ENCODE measurements at regions of chr20 and their contacts with region 1.

Region 1: GRCh38 chr20:29123861-29124260 is 2133.6 kb upstream of the DEFB115 start:
- DNase-seq: no peak
- ATAC-seq: no peak
- H3K4me3 ChIP-seq: no peak overlapping the region
- H3K27ac ChIP-seq: no peak overlapping the region
- H3K4me1 ChIP-seq: no peaks in the 10 kb centered on the region
- H3K27me3 ChIP-seq: no peaks in the 10 kb centered on the region
- CTCF ChIP-seq: no peak
- POLR2A ChIP-seq: no peak
- RAD21 ChIP-seq: no peak

Region 2: DNA sequence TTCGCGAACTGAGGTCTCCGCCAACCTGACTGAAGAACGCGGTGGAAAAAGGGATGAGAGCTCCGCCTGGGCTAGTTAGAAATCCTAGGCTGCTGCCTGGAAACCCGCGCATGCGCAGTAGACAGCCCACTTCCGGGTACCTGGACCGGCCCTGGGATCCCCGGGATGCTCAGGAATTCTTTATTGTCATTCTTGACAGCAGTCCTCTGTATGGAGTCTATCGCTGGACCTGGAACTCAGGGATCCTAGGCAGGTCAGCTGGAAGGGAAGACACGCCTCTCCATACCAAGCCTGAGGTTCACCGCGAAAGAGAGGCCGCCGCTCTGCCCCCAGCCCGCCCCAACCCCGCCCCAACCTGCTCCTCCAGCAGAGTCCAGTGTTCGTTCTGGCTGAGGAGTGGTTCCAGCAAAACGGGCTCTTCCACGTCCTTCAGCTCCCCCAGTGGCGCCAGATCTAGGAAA is 754.5 kb after region 1 on chr20:
- CTCF ChIA-PET with region 1: no interaction called
- POLR2A ChIA-PET with region 1: no interaction called
- RAD21 ChIA-PET with region 1: no interaction called
- intact Hi-C with region 1: loop called (anchors 10 kb)
- DNase-seq: no peak
- ATAC-seq: peak; percentile 27; the same call in 1 of the 2 replicates
- H3K4me3 ChIP-seq: no peak overlapping the region
- H3K27ac ChIP-seq: no peak overlapping the region
- H3K4me1 ChIP-seq: no peaks in the 10 kb centered on the region
- H3K27me3 ChIP-seq: no peaks in the 10 kb centered on the region
- CTCF ChIP-seq: no peak
- POLR2A ChIP-seq: no peak
- RAD21 ChIP-seq: no peak